CD4-positive, alpha-beta T cell (primary cell): ENCODE measurements at regions of chr18 and their contacts with region 1.

Region 1: DNA sequence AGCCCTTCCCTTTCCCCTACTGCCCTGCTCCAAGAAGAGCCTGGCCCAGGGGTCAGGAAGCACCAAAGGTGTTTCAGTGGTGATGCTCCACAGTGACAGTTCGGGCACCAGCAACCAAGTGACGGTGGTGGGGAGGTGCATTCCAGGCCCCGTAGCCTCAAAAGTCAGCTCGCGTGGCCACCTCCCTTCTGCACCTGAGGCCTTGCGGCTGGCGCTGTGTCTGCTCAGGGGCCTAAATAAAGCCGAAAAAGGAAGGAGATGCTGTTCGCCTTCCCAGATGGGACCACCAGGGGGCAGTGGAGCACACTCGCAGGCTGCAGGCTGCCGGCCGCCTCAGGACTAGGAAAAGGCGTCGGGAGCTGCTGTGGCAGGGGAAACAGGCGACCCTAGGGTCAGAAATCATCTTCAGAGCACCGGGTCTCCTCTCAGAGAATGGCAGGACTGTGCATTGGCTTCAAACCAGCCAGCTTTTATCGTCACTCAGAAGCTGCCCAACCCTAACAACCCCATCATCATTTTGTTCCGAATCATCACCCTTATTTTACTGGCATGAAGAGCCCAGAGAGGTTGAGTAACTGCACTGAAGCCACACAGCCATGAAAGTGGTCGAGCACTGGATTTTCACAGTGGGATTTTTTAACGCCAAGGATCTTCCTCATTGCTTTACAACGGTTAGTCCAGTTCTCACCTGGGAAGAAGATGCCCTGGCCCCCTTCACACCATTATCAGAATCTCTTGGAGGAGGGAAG is 213.0 kb upstream of the CELF4 start:
- DNase-seq: peak in 4 of 14 experiments; percentile 1 to 27 (median 14)
- ATAC-seq: no peak
- H3K4me3 ChIP-seq: no peak overlapping the region
- H3K4me3 Mint-ChIP-seq: no peak overlapping the region
- H3K27ac ChIP-seq: no peak overlapping the region
- H3K27ac Mint-ChIP-seq: no peak overlapping the region
- H3K4me1 ChIP-seq: no peaks in the 10 kb centered on the region
- H3K4me1 Mint-ChIP-seq: no peaks in the 10 kb centered on the region
- H3K27me3 ChIP-seq: no peaks in the 10 kb centered on the region
- H3K27me3 Mint-ChIP-seq: no peaks in the 10 kb centered on the region
- CTCF ChIP-seq: no peak

Region 2: GRCh38 chr18:37710726-37711125 is 67.9 kb before region 1 on chr18:
- CTCF ChIA-PET with region 1: no interaction called
- POLR2A ChIA-PET with region 1: no interaction called
- intact Hi-C with region 1: loop called in 1 of 2 experiments (anchors 10 kb)
- DNase-seq: no peak
- ATAC-seq: no peak
- H3K4me3 ChIP-seq: no peak overlapping the region
- H3K4me3 Mint-ChIP-seq: no peak overlapping the region
- H3K27ac ChIP-seq: no peak overlapping the region
- H3K27ac Mint-ChIP-seq: no peak overlapping the region
- H3K4me1 ChIP-seq: no peaks in the 10 kb centered on the region
- H3K4me1 Mint-ChIP-seq: no peaks in the 10 kb centered on the region
- H3K27me3 ChIP-seq: no peaks in the 10 kb centered on the region
- H3K27me3 Mint-ChIP-seq: no peaks in the 10 kb centered on the region
- CTCF ChIP-seq: no peak

Region 3: DNA sequence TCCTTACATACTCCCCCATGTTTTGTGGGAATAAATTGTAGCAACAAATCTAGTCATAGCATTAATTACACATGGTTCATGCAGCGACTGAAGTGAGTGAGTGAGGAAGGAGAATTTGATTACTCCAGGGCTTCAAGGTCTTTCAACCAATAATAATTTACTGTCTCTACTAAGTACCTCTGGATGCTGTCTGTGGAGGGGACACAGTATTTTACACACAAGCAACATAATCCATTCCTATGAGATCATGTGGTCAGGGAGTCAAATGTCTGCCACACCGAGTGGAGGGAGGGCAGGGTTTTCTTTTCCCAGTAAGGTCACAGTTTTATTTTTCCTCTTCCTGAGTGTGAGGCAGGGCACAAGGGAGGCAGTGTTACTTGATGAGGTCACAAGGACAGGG is 121.7 kb after region 1 on chr18:
- CTCF ChIA-PET with region 1: no interaction called
- POLR2A ChIA-PET with region 1: no interaction called
- intact Hi-C with region 1: no loop called
- DNase-seq: no peak
- ATAC-seq: no peak
- H3K4me3 ChIP-seq: no peak overlapping the region
- H3K4me3 Mint-ChIP-seq: no peak overlapping the region
- H3K27ac ChIP-seq: no peak overlapping the region
- H3K27ac Mint-ChIP-seq: no peak overlapping the region
- H3K4me1 ChIP-seq: no peaks in the 10 kb centered on the region
- H3K4me1 Mint-ChIP-seq: no peaks in the 10 kb centered on the region
- H3K27me3 ChIP-seq: no peaks in the 10 kb centered on the region
- H3K27me3 Mint-ChIP-seq: no peaks in the 10 kb centered on the region
- CTCF ChIP-seq: no peak